Aorta (tissue), 5 donors: ENCODE measurements at regions of chr6 and their contacts with region 1.

Region 1: GRCh38 chr6:165662749-165663282 is at the start of gene PDE10A:
- DNase-seq: peak; percentile 55 to 78
- ATAC-seq: peak; percentile 67
- H3K4me3 ChIP-seq: peak within 1 kb of the TSS; percentile 64 to 88
- H3K27ac ChIP-seq: no peak within 1 kb of the TSS
- H3K4me1 ChIP-seq: no peaks in the 10 kb centered on the region
- H3K27me3 ChIP-seq: peaks cover 1 to 4% of the 10 kb centered on the region in 2 donors
- total RNA-seq, gene PDE10A: 8.7 to 17.1 TPM

Region 2: GRCh38 chr6:165704045-165704748 is 41.4 kb after region 1 on chr6:
- intact Hi-C with region 1: loop called in 1 of 2 experiments (anchors 5 kb)
- DNase-seq: no peak
- ATAC-seq: no peak
- H3K4me3 ChIP-seq: no peak overlapping the region
- H3K27ac ChIP-seq: no peak overlapping the region
- H3K4me1 ChIP-seq: peaks cover 3 to 5% of the 10 kb centered on the region in 2 donors
- H3K27me3 ChIP-seq: no peaks in the 10 kb centered on the region

Region 3: DNA sequence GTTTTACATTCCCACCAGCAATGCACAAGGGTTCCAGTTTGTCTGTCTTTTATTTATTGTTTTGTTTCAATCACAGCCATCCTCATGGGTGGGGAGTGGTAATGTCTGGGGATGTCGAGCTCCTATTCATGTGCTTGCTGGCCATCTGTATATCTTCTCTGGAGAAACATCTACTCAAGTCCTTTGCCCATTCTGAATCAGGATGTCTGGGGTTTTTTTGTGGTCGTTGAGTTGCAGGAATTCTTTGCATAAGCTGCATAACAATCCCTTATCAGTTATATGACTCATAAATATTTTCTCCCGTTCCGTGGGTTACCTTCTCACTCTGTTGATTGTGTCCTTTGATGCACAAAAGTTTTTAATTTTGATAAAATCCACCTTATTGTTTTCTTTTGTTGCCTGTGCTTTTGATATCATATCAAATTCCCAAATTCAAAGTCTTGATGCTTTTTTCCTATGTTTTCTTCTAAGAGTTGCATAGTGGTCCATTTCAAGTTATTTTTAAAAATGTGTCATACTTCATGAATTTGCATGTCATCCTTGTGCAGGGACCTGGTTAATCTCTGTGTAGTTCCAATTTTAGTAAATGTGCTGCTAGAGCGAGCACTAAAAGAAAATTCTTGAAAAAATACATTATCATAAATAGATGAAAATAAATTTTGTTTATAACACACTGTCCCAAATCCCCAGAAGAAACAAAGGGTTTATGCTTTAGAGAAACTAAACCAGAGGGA is 55.1 kb after region 1 on chr6:
- intact Hi-C with region 1: loop called in 1 of 2 experiments (anchors 1 kb)
- DNase-seq: no peak
- ATAC-seq: no peak
- H3K4me3 ChIP-seq: no peak overlapping the region
- H3K27ac ChIP-seq: peak overlapping the region; percentile 83 to 94
- H3K4me1 ChIP-seq: no peaks in the 10 kb centered on the region
- H3K27me3 ChIP-seq: no peaks in the 10 kb centered on the region

Region 4: DNA sequence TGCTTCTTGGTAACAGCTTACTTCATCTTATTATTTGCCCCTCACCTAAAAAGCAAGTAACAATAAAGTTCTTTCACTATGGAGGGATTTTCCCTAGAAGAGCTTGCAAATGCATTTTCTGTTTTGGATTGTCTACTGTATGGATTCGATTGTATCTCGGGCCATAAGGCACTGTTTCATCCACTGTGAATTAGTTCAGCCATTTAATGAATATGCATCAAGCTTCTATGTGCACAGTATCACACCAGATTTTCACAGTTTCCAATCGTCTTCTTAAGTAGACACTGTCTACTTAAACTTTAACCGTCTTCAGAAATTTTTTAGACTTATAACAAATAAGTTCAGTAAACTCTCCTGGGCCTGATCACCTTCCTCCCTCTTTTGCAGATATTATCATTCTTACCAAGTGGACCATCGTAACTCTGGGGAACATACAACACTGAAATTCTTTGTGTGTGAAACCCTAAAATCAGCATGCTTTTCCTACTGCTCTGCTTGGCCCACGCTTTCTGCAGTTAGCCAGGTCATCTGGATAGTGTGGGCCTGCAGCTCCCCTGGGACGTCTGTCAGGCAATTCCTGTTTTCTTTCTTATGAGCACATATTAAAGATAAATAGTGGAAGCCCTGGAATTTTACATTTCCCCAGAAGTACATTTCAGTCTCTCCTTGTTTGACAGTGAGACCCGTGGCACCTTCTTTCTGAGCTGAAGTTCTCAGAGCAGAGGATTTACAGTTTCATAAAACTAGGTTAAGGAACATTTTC is 136.8 kb after region 1 on chr6:
- intact Hi-C with region 1: no loop called
- DNase-seq: no peak
- ATAC-seq: no peak
- H3K4me3 ChIP-seq: no peak overlapping the region
- H3K27ac ChIP-seq: no peak overlapping the region
- H3K4me1 ChIP-seq: no peaks in the 10 kb centered on the region
- H3K27me3 ChIP-seq: no peaks in the 10 kb centered on the region

Region 5: GRCh38 chr6:165850434-165851019 is 187.7 kb after region 1 on chr6:
- intact Hi-C with region 1: loop called in 1 of 2 experiments (anchors 10 kb)
- DNase-seq: peak in 1 of 2 donors; percentile 74
- ATAC-seq: peak; percentile 82
- H3K4me3 ChIP-seq: no peak overlapping the region
- H3K27ac ChIP-seq: no peak overlapping the region
- H3K4me1 ChIP-seq: peaks cover 0 to 4% of the 10 kb centered on the region in 2 donors
- H3K27me3 ChIP-seq: no peaks in the 10 kb centered on the region